BJ (cell line): ENCODE measurements at regions of chr1 and their contacts with region 1.

Region 1: GRCh38 chr1:93807307-93807930 is 71.6 kb downstream of the DNTTIP2 start:
- DNase-seq: no peak
- H3K4me3 ChIP-seq: no peak overlapping the region
- H3K27me3 ChIP-seq: no peaks in the 10 kb centered on the region
- CTCF ChIP-seq: no peak

Region 2: GRCh38 chr1:93779540-93780192 is 27.8 kb before region 1 on chr1:
- CTCF ChIA-PET with region 1: no interaction called
- POLR2A ChIA-PET with region 1: interaction called, 13 read pairs
- DNase-seq: peak; percentile 31
- H3K4me3 ChIP-seq: no peak overlapping the region
- H3K27me3 ChIP-seq: no peaks in the 10 kb centered on the region
- CTCF ChIP-seq: no peak

Region 3: GRCh38 chr1:93874025-93874651 is 66.7 kb after region 1 on chr1:
- CTCF ChIA-PET with region 1: no interaction called
- POLR2A ChIA-PET with region 1: no interaction called
- DNase-seq: no peak
- H3K4me3 ChIP-seq: no peak overlapping the region
- H3K27me3 ChIP-seq: no peaks in the 10 kb centered on the region
- CTCF ChIP-seq: peak; percentile 44

Region 4: GRCh38 chr1:93909146-93910050 is 102.0 kb after region 1 on chr1 and contains the start of gene GCLM:
- CTCF ChIA-PET with region 1: no interaction called
- POLR2A ChIA-PET with region 1: no interaction called
- DNase-seq: peak; percentile 74
- H3K4me3 ChIP-seq: peak within 1 kb of the TSS; percentile 90
- H3K27me3 ChIP-seq: no peaks in the 10 kb centered on the region
- CTCF ChIP-seq: peak; percentile 74
- polyA plus RNA-seq, gene GCLM: 19.1 and 35.1 TPM in 2 replicates